Stomach (tissue), 19 donors: ENCODE measurements at regions of chr6 and their contacts with region 1.

Region 1: GRCh38 chr6:111804627-111805235 is 68.5 kb downstream of the FYN start:
- DNase-seq: peak; percentile 36 to 61
- H3K4me3 ChIP-seq: no peak overlapping the region
- H3K27ac ChIP-seq: peak overlapping the region; percentile 38 to 81 (median 64)
- H3K4me1 ChIP-seq: peaks cover 17 to 57% (median 39%) of the 10 kb centered on the region in 4 donors
- H3K27me3 ChIP-seq: no peaks in the 10 kb centered on the region
- CTCF ChIP-seq: no peak
- EP300 ChIP-seq: no peak
- POLR2A ChIP-seq: no peak

Region 2: DNA sequence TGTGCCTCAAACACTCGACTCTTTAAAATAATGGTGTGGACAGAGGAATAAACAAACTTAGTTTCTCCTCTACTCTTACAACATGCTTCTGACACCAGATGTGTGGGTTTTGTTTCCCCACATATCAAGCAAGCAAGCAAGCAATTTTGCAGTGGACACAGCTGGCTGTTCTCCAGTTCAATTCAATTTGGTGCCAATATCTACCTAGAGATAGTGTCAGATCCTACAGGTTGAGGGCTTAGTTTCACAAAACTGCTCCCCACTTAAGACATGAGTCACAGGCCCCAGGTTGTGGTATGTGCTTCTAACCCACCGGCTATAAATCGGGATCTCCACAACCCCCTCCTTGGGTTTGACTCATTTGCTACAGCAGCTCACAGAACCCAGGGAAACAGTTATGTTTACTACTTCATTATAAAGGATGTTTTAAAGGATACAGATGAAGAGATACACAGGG is 67.6 kb before region 1 on chr6:
- intact Hi-C with region 1: no loop called
- DNase-seq: no peak
- H3K4me3 ChIP-seq: no peak overlapping the region
- H3K27ac ChIP-seq: peak overlapping the region in 1 of 5 donors; percentile 16
- H3K4me1 ChIP-seq: peaks cover 14 to 53% (median 35%) of the 10 kb centered on the region in 4 donors
- H3K27me3 ChIP-seq: no peaks in the 10 kb centered on the region
- CTCF ChIP-seq: no peak
- EP300 ChIP-seq: no peak
- POLR2A ChIP-seq: no peak

Region 3: GRCh38 chr6:112149719-112150263 is 345.1 kb after region 1 on chr6:
- intact Hi-C with region 1: loop called (anchors 10 kb)
- DNase-seq: peak in 1 of 2 donors; percentile 76
- H3K4me3 ChIP-seq: no peak overlapping the region
- H3K27ac ChIP-seq: peak overlapping the region in 4 of 5 donors; percentile 60 to 77 (median 70)
- H3K4me1 ChIP-seq: peaks cover 0 to 18% (median 0%) of the 10 kb centered on the region in 4 donors
- H3K27me3 ChIP-seq: no peaks in the 10 kb centered on the region
- CTCF ChIP-seq: no peak
- EP300 ChIP-seq: no peak
- POLR2A ChIP-seq: no peak